ENCODE measurements at regions of chr4 and their contacts with region 1.

Region 1: GRCh38 chr4:41934815-41935651 is at the start of gene TMEM33:
- DNase-seq: peak; percentile 85
- ATAC-seq: peak; percentile 92
- H3K4me3 ChIP-seq: peak within 1 kb of the TSS; percentile 88
- H3K27ac ChIP-seq: peak within 1 kb of the TSS; percentile 79
- H3K4me1 ChIP-seq: peaks cover 27% of the 10 kb centered on the region
- H3K27me3 ChIP-seq: no peaks in the 10 kb centered on the region
- CTCF ChIP-seq: no peak
- total RNA-seq, gene TMEM33: 70.3 and 97.4 TPM in 2 replicates

Region 2: DNA sequence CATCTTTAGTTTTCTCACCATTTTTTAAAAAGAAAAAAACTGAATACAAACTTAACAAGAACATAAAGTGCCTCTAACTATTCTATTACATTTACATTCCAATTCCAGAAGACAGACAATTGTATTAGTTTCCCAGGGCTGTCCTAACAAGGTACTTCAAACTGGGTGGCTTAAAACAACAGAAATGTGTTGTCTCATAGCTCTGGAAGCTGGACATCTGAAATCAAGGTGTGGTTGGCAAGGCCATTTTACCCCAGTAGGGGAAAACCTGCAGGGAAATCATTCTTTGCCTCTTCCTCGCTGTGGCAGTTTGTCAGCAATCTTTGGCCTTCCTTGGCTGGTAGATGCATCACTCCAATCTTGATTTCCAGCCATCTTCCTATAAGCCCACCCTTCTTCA is 37.3 kb before region 1 on chr4:
- CTCF ChIA-PET with region 1: no interaction called
- POLR2A ChIA-PET with region 1: no interaction called
- intact Hi-C with region 1: loop called (anchors 2 kb)
- DNase-seq: peak; percentile 46
- ATAC-seq: peak; percentile 68
- H3K4me3 ChIP-seq: no peak overlapping the region
- H3K27ac ChIP-seq: peak overlapping the region; percentile 55
- H3K4me1 ChIP-seq: peaks cover 13% of the 10 kb centered on the region
- H3K27me3 ChIP-seq: no peaks in the 10 kb centered on the region
- CTCF ChIP-seq: no peak